Gastrocnemius medialis (tissue), 4 donors: ENCODE measurements at regions of chr10 and their contacts with region 1.

Region 1: GRCh38 chr10:29443745-29444523 is 155.1 kb downstream of the LYZL1 start:
- DNase-seq: no peak
- ATAC-seq: no peak
- H3K4me3 ChIP-seq: no peak overlapping the region
- H3K27ac ChIP-seq: no peak overlapping the region
- H3K4me1 ChIP-seq: peaks cover 9 to 13% of the 10 kb centered on the region in 2 donors
- H3K27me3 ChIP-seq: no peaks in the 10 kb centered on the region
- CTCF ChIP-seq: no peak
- POLR2A ChIP-seq: no peak

Region 2: GRCh38 chr10:29328983-29329382 is 115.0 kb before region 1 on chr10:
- in situ Hi-C with region 1: no loop called
- intact Hi-C with region 1: no loop called
- DNase-seq: peak; percentile 23 to 48
- ATAC-seq: peak; percentile 52 to 71
- H3K4me3 ChIP-seq: no peak overlapping the region
- H3K27ac ChIP-seq: no peak overlapping the region
- H3K4me1 ChIP-seq: peaks cover 8% of the 10 kb centered on the region in 2 donors
- H3K27me3 ChIP-seq: no peaks in the 10 kb centered on the region
- CTCF ChIP-seq: no peak
- POLR2A ChIP-seq: no peak

Region 3: DNA sequence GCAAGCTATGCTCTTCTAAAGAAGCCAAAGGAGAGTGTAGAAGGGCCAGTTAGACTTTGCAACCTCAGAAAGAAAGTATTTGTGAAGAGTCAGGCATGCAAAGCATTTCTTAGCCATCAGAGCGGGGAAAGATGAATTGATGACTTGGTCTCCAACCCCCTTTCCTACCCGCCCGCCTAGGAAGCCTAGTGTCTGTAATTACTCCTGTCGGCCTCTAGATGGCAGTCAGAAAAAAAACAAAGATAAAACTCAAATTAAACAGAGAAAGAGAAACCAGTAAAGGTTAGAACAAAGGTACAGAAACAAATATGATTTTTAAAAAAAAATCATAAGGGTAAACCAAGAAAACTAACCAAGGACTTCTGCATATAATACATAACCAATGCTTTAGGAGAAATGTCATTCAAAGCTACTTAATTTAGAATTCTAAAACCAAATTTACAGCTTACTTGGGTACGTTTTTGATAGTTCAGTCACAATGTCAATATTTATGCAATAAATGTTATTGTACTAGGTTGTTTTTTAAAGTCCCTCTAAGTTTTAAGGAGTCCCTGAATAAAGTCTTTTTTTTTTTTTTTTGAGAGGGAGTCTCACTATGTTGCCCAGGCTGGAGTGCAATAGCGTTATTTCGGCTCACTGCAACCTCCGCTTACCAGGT is 57.5 kb before region 1 on chr10:
- in situ Hi-C with region 1: loop called (anchors 5 to 10 kb)
- intact Hi-C with region 1: loop called (anchors 2 kb)
- DNase-seq: no peak
- ATAC-seq: peak; percentile 26 to 69
- H3K4me3 ChIP-seq: no peak overlapping the region
- H3K27ac ChIP-seq: no peak overlapping the region
- H3K4me1 ChIP-seq: no peaks in the 10 kb centered on the region
- H3K27me3 ChIP-seq: no peaks in the 10 kb centered on the region
- CTCF ChIP-seq: peak; percentile 55 to 80 (median 68)
- POLR2A ChIP-seq: no peak